Mammary epithelial cell (primary cell): ENCODE measurements at regions of chr20 and their contacts with region 1.

Region 1: DNA sequence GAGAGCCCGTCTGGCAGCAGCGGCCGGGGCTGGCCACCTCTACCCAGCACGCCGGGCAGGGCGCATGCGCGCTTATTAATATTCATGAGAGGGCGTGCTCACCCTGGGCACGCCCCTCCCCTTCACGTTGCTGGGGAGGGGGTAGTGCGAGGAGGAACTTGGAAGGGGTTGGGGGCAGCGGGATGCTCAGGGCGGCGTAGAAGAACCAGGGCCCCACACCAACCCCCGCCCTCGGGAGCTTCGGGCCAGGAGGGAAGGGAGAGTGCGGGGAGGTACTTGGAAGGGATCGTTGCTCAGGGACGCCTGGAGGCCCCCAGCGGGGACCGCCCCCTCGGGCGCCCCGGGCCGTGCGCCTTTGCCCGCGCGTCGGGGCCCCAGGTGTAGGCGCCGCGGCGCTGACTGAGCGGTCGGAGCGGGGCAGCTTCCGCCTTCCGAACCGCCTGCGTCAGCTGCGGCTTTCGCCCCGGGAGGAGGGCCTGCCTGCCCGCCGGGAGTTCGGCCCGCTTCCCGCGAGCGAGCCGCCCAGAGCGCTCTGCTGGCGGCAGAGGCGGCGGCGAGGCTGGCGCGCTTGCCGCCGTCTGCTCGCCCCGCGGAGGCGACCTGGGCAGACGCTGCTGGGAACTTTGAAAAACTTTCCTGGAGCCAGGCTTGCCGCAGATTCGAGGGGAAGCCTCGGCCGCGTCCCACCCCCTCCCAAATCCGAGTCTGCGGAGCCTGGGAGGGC is at the start of gene JAG1:
- DNase-seq: peak; percentile 95
- H3K4me3 ChIP-seq: peak within 1 kb of the TSS; percentile 85 to 97 (median 87)
- H3K27ac ChIP-seq: peak within 1 kb of the TSS; percentile 93
- H3K4me1 ChIP-seq: peaks cover 27% of the 10 kb centered on the region
- H3K27me3 ChIP-seq: no peaks in the 10 kb centered on the region
- CTCF ChIP-seq: no peak
- total RNA-seq, gene JAG1: 244 to 283 TPM

Region 2: DNA sequence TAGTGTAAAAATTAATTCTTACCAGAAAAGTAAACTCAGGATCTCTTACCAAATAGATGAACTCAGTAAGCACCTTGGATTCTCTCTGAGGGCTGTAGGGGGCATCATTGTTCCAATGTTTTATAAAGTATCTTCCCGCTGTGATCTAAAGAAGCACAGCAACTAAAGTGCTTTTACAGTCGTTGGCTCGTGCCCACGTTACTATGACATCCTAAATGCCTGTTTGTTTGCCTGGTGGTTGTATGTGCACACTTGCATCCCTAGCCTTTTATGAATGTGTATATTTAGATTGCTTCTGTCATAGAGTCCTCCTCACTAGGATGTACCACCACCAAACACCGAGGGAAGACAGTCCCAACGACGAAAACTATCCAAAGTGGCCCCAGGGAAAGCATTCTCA is 204.6 kb before region 1 on chr20:
- CTCF ChIA-PET with region 1: no interaction called
- dilution Hi-C with region 1: no loop called
- in situ Hi-C with region 1: no loop called
- intact Hi-C with region 1: loop called (anchors 1 kb)
- DNase-seq: peak; percentile 73
- H3K4me3 ChIP-seq: no peak overlapping the region
- H3K27ac ChIP-seq: peak overlapping the region; percentile 37
- H3K4me1 ChIP-seq: peaks cover 20% of the 10 kb centered on the region
- H3K27me3 ChIP-seq: no peaks in the 10 kb centered on the region
- CTCF ChIP-seq: peak; percentile 73 to 75

Region 3: GRCh38 chr20:10793766-10794165 is 119.6 kb after region 1 on chr20:
- CTCF ChIA-PET with region 1: no interaction called
- dilution Hi-C with region 1: no loop called
- in situ Hi-C with region 1: no loop called
- intact Hi-C with region 1: loop called (anchors 10 kb)
- DNase-seq: no peak
- H3K4me3 ChIP-seq: no peak overlapping the region
- H3K27ac ChIP-seq: no peak overlapping the region
- H3K4me1 ChIP-seq: peaks cover 13% of the 10 kb centered on the region
- H3K27me3 ChIP-seq: no peaks in the 10 kb centered on the region
- CTCF ChIP-seq: no peak

Region 4: GRCh38 chr20:10954137-10954840 is 280.1 kb after region 1 on chr20:
- CTCF ChIA-PET with region 1: no interaction called
- dilution Hi-C with region 1: no loop called
- in situ Hi-C with region 1: no loop called
- intact Hi-C with region 1: loop called (anchors 10 kb)
- DNase-seq: peak; percentile 96
- H3K4me3 ChIP-seq: no peak overlapping the region
- H3K27ac ChIP-seq: peak overlapping the region; percentile 77
- H3K4me1 ChIP-seq: peaks cover 42% of the 10 kb centered on the region
- H3K27me3 ChIP-seq: no peaks in the 10 kb centered on the region
- CTCF ChIP-seq: no peak

Region 5: GRCh38 chr20:11140359-11140758 is 466.2 kb after region 1 on chr20:
- CTCF ChIA-PET with region 1: no interaction called
- dilution Hi-C with region 1: no loop called
- in situ Hi-C with region 1: no loop called
- intact Hi-C with region 1: loop called (anchors 1 kb)
- DNase-seq: peak; percentile 98
- H3K4me3 ChIP-seq: no peak overlapping the region
- H3K27ac ChIP-seq: peak overlapping the region; percentile 74
- H3K4me1 ChIP-seq: peaks cover 21% of the 10 kb centered on the region
- H3K27me3 ChIP-seq: no peaks in the 10 kb centered on the region
- CTCF ChIP-seq: peak in 1 of 2 donors; percentile 42

Region 6: GRCh38 chr20:11350126-11351005 is 676.2 kb after region 1 on chr20:
- CTCF ChIA-PET with region 1: interaction called, 8 read pairs
- dilution Hi-C with region 1: no loop called
- in situ Hi-C with region 1: no loop called
- intact Hi-C with region 1: loop called (anchors 1 kb)
- DNase-seq: peak; percentile 98
- H3K4me3 ChIP-seq: no peak overlapping the region
- H3K27ac ChIP-seq: peak overlapping the region; percentile 59
- H3K4me1 ChIP-seq: peaks cover 25% of the 10 kb centered on the region
- H3K27me3 ChIP-seq: no peaks in the 10 kb centered on the region
- CTCF ChIP-seq: peak; percentile 28 to 59